Caco-2 (cell line): ENCODE measurements at regions of chr16 and their contacts with region 1.

Region 1: GRCh38 chr16:53881371-53881770 is 177.4 kb downstream of the FTO start:
- DNase-seq: peak; percentile 77 to 91
- H3K4me3 ChIP-seq: no peak overlapping the region
- H3K4me3 Mint-ChIP-seq: no peak overlapping the region
- H3K27ac Mint-ChIP-seq: peak overlapping the region; percentile 84
- H3K4me1 ChIP-seq: peaks cover 37% of the 10 kb centered on the region
- H3K4me1 Mint-ChIP-seq: peaks cover 27% of the 10 kb centered on the region
- H3K27me3 ChIP-seq: no peaks in the 10 kb centered on the region
- H3K27me3 Mint-ChIP-seq: no peaks in the 10 kb centered on the region
- CTCF ChIP-seq: no peak

Region 2: GRCh38 chr16:53812914-53813313 is 68.5 kb before region 1 on chr16:
- CTCF ChIA-PET with region 1: no interaction called
- POLR2A ChIA-PET with region 1: no interaction called
- intact Hi-C with region 1: loop called (anchors 1 kb)
- DNase-seq: peak; percentile 48 to 56
- H3K4me3 ChIP-seq: no peak overlapping the region
- H3K4me3 Mint-ChIP-seq: no peak overlapping the region
- H3K27ac Mint-ChIP-seq: no peak overlapping the region
- H3K4me1 ChIP-seq: peaks cover 35% of the 10 kb centered on the region
- H3K4me1 Mint-ChIP-seq: peaks cover 49% of the 10 kb centered on the region
- H3K27me3 ChIP-seq: no peaks in the 10 kb centered on the region; the same call in 1 of the 2 replicates
- H3K27me3 Mint-ChIP-seq: no peaks in the 10 kb centered on the region
- CTCF ChIP-seq: no peak

Region 3: DNA sequence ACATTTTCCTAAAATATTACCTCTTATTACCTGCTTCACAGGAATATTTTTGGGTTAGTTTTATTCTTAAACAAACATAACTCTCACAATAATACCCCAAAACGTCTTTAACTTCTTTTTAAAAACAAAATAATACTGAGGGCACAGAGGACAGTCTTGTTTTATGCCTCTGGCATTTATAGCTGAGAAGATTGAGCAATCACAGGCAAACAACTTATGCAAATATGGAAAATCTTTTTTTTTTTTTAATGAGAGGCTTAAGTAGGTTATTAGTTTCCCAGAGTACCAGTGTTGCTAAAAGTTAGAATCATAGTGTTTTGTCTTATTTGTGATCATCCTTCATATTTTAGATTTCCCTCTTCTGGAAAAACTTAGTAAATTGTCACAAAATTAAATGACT is 17.6 kb after region 1 on chr16:
- CTCF ChIA-PET with region 1: interaction called, 4 read pairs
- POLR2A ChIA-PET with region 1: interaction called, 3 read pairs
- intact Hi-C with region 1: loop called (anchors 2 kb)
- DNase-seq: peak in 1 of 2 experiments; percentile 41
- H3K4me3 ChIP-seq: no peak overlapping the region
- H3K4me3 Mint-ChIP-seq: no peak overlapping the region
- H3K27ac Mint-ChIP-seq: peak overlapping the region; percentile 24
- H3K4me1 ChIP-seq: peaks cover 75% of the 10 kb centered on the region
- H3K4me1 Mint-ChIP-seq: peaks cover 76% of the 10 kb centered on the region
- H3K27me3 ChIP-seq: no peaks in the 10 kb centered on the region
- H3K27me3 Mint-ChIP-seq: no peaks in the 10 kb centered on the region
- CTCF ChIP-seq: no peak

Region 4: DNA sequence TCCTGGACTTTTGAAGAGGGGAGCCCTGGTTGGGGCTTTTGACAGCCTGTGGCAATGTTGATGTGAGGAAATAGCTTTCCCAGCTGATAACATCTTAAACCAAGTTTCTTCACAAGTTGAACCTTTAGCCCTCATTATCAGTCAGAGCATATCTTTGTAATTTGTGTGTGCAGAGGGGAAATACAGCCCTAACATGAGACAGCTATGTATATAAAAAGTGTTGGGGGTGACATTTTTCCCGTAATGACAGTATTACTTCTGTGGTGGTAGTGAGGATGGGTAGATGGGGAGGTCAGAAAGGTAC is 43.7 kb after region 1 on chr16:
- CTCF ChIA-PET with region 1: no interaction called
- POLR2A ChIA-PET with region 1: no interaction called
- intact Hi-C with region 1: loop called (anchors 1 kb)
- DNase-seq: peak; percentile 81 to 82
- H3K4me3 ChIP-seq: no peak overlapping the region
- H3K4me3 Mint-ChIP-seq: peak overlapping the region; percentile 55
- H3K27ac Mint-ChIP-seq: peak overlapping the region; percentile 79
- H3K4me1 ChIP-seq: peaks cover 43% of the 10 kb centered on the region
- H3K4me1 Mint-ChIP-seq: peaks cover 28% of the 10 kb centered on the region
- H3K27me3 ChIP-seq: no peaks in the 10 kb centered on the region
- H3K27me3 Mint-ChIP-seq: no peaks in the 10 kb centered on the region
- CTCF ChIP-seq: no peak

Region 5: DNA sequence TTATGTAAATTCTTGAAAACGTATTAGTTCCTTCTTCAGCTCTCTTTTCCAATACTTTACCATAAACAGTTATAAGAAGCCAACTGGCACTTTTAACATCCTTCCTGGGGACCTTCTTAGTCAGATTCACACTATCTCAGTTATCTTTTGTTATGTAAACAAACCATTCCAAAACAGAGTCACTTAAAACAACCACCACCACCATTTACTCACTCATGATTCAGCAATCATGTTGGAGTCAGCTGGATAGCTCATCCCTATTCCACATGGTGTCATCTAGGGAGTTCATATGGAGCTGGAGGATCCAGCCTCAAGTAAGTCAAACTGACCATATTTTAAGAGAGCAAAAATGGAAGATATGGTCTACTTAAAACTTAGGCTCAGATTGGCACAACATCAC is 645.5 kb after region 1 on chr16:
- CTCF ChIA-PET with region 1: no interaction called
- POLR2A ChIA-PET with region 1: interaction called, 14 read pairs
- intact Hi-C with region 1: no loop called
- DNase-seq: no peak
- H3K4me3 ChIP-seq: no peak overlapping the region
- H3K4me3 Mint-ChIP-seq: no peak overlapping the region
- H3K27ac Mint-ChIP-seq: no peak overlapping the region
- H3K4me1 ChIP-seq: no peaks in the 10 kb centered on the region
- H3K4me1 Mint-ChIP-seq: no peaks in the 10 kb centered on the region
- H3K27me3 ChIP-seq: no peaks in the 10 kb centered on the region
- H3K27me3 Mint-ChIP-seq: no peaks in the 10 kb centered on the region
- CTCF ChIP-seq: no peak